Activated B cell treated with CpG ODN at 0.5 μM for 24 hours (primary cell): ENCODE measurements at regions of chr3 and their contacts with region 1.

Region 1: DNA sequence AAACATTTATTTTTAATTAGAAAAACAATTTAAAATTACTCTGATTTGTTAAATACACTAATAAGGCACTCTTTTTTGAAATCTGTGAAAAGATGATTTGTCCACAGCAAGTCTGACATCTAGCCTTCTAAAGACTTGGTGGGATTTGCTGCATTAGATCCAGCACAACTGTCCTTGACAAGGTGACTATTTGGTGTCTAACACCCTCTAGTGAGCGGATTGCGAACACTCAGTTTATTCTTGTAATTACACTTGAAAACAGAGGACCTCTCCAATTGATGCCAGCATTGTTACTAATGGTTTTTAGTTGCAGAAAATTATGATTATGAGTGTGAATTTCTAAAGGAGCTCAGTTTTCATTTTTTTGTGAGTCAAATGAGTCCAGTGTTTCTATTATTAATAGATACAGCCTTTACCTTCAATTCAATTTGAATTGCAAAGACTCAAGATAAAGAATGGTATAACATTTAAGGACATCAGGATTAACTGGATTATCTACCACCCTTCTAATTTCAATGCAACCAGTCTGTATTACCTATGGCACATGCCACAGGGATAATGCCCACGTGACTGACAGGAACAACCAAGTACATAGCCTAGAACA is 29.7 kb upstream of the STRIT1 start:
- DNase-seq: no peak
- ATAC-seq: no peak
- H3K4me3 Mint-ChIP-seq: no peak overlapping the region
- H3K27ac Mint-ChIP-seq: no peak overlapping the region
- H3K4me1 Mint-ChIP-seq: no peaks in the 10 kb centered on the region
- H3K27me3 Mint-ChIP-seq: no peaks in the 10 kb centered on the region
- CTCF ChIP-seq: peak; percentile 52

Region 2: GRCh38 chr3:154334973-154335420 is 988.2 kb before region 1 on chr3:
- CTCF ChIA-PET with region 1: interaction called, 3 read pairs
- POLR2A ChIA-PET with region 1: no interaction called
- intact Hi-C with region 1: loop called (anchors 1 kb)
- DNase-seq: no peak
- ATAC-seq: no peak
- H3K4me3 Mint-ChIP-seq: no peak overlapping the region
- H3K27ac Mint-ChIP-seq: no peak overlapping the region
- H3K4me1 Mint-ChIP-seq: no peaks in the 10 kb centered on the region
- H3K27me3 Mint-ChIP-seq: peaks cover 5% of the 10 kb centered on the region
- CTCF ChIP-seq: peak; percentile 27

Region 3: DNA sequence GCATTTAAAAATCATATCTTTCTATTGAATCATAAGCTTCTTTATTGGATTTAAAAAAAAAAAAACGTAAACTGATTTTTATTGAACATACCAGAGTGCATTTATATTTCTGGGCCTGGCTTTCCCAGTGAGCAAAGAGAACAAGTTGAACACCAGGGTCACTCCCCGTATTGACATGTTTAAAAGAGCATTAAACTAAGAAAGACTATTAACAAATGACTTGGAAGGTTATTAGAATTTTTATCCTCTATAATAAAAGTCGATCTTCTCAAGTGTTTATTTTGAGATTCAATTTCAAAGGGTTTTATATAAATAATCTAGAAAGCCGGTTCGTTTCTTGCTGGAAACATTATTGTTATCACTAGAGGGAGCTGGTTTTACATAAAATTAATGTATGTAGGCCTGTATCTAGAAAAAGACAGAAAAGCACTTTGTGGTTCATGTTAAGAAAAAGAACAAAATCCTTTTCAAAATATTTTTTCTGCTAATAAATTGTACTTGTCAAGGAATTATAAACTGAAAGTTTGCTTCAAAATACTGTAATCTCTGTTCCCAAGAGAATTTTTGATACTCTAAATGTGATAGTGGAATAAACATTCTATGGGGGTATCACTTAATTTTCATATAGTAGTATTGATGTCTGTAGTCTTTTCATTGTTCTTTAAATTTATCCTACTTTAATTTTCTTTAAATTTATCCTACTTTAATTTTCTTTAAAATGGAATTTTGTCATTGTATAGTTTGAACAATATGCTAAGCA is 564.9 kb before region 1 on chr3:
- CTCF ChIA-PET with region 1: interaction called, 3 read pairs
- POLR2A ChIA-PET with region 1: no interaction called
- intact Hi-C with region 1: loop called (anchors 1 kb)
- DNase-seq: no peak
- ATAC-seq: no peak
- H3K4me3 Mint-ChIP-seq: no peak overlapping the region
- H3K27ac Mint-ChIP-seq: no peak overlapping the region
- H3K4me1 Mint-ChIP-seq: no peaks in the 10 kb centered on the region
- H3K27me3 Mint-ChIP-seq: no peaks in the 10 kb centered on the region
- CTCF ChIP-seq: no peak

Region 4: DNA sequence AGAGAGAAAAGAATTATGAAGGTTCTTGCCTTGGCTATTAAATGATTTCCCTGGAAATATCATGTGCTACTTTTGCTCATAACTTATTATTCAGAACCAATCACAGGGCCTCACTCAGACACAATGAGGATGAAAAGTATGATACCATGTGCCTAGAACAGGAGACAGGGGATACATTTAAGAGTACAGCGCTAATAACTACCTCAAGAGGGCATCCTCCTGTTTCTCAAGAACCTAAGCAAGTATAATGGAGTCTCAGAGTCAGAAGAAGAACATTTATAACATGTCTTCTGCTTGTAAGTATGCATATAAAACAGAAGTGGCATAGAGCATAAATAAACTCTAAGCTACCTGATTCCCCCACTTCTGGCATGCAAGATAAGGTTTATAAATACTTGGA is 368.4 kb before region 1 on chr3:
- CTCF ChIA-PET with region 1: interaction called, 9 read pairs
- POLR2A ChIA-PET with region 1: no interaction called
- intact Hi-C with region 1: loop called (anchors 1 kb)
- DNase-seq: no peak
- ATAC-seq: no peak
- H3K4me3 Mint-ChIP-seq: no peak overlapping the region
- H3K27ac Mint-ChIP-seq: no peak overlapping the region
- H3K4me1 Mint-ChIP-seq: no peaks in the 10 kb centered on the region
- H3K27me3 Mint-ChIP-seq: no peaks in the 10 kb centered on the region
- CTCF ChIP-seq: no peak

Region 5: GRCh38 chr3:155079746-155080487 is 243.2 kb before region 1 on chr3 and contains the start of gene MME:
- CTCF ChIA-PET with region 1: no interaction called
- POLR2A ChIA-PET with region 1: no interaction called
- intact Hi-C with region 1: loop called (anchors 10 kb)
- DNase-seq: peak; percentile 22
- ATAC-seq: peak; percentile 52
- H3K4me3 Mint-ChIP-seq: peak within 1 kb of the TSS; percentile 80
- H3K27ac Mint-ChIP-seq: no peak within 1 kb of the TSS
- H3K4me1 Mint-ChIP-seq: peaks cover 18% of the 10 kb centered on the region
- H3K27me3 Mint-ChIP-seq: peaks cover 26% of the 10 kb centered on the region
- CTCF ChIP-seq: no peak
- total RNA-seq, gene MME: 2.1 and 3.4 TPM in 2 replicates